Activated naive CD4-positive, alpha-beta T cell treated with anti-CD3 and anti-CD28 coated beads for 36 hours (primary cell): ENCODE measurements at regions of chr5 and their contacts with region 1.

Region 1: GRCh38 chr5:57435701-57436134 is 46.9 kb downstream of the ACTBL2 start:
- DNase-seq: no peak
- H3K4me3 Mint-ChIP-seq: no peak overlapping the region
- H3K27ac Mint-ChIP-seq: no peak overlapping the region
- H3K4me1 Mint-ChIP-seq: no peaks in the 10 kb centered on the region
- H3K27me3 Mint-ChIP-seq: peaks cover 2% of the 10 kb centered on the region

Region 2: GRCh38 chr5:57416249-57416994 is 19.3 kb before region 1 on chr5:
- CTCF ChIA-PET with region 1: no interaction called
- intact Hi-C with region 1: loop called (anchors 1 kb)
- DNase-seq: no peak
- H3K4me3 Mint-ChIP-seq: no peak overlapping the region
- H3K27ac Mint-ChIP-seq: no peak overlapping the region
- H3K4me1 Mint-ChIP-seq: no peaks in the 10 kb centered on the region
- H3K27me3 Mint-ChIP-seq: no peaks in the 10 kb centered on the region